H1 (cell line): ENCODE measurements at regions of chr1 and their contacts with region 1.

Region 1: GRCh38 chr1:38818175-38818976 is 41.2 kb downstream of the RRAGC start:
- DNase-seq: peak in 1 of 2 experiments; percentile 97
- H3K4me3 ChIP-seq: peak overlapping the region; percentile 52 to 74 (median 60)
- H3K27ac ChIP-seq: no peak overlapping the region
- H3K4me1 ChIP-seq: peaks cover 2 to 6% (median 3%) of the 10 kb centered on the region in 4 experiments; a peak in 4 of 7 replicates
- H3K27me3 ChIP-seq: peaks cover 6 to 43% (median 26%) of the 10 kb centered on the region in 4 experiments
- CTCF ChIP-seq: peak; percentile 64 to 97 (median 73)
- EP300 ChIP-seq: no peak
- POLR2A ChIP-seq: no peak
- RAD21 ChIP-seq: peak; percentile 72 to 94

Region 2: GRCh38 chr1:38571726-38572125 is 246.7 kb before region 1 on chr1:
- CTCF ChIA-PET with region 1: interaction called, 11 read pairs
- POLR2A ChIA-PET with region 1: no interaction called
- DNase-seq: no peak
- H3K4me3 ChIP-seq: no peak overlapping the region
- H3K27ac ChIP-seq: no peak overlapping the region
- H3K4me1 ChIP-seq: peaks cover 0 to 6% (median 4%) of the 10 kb centered on the region in 4 experiments; a peak in 3 of 7 replicates
- H3K27me3 ChIP-seq: peaks cover 0 to under 1% (median 0%) of the 10 kb centered on the region in 4 experiments; a peak in 2 of 7 replicates
- CTCF ChIP-seq: no peak
- EP300 ChIP-seq: no peak
- POLR2A ChIP-seq: no peak
- RAD21 ChIP-seq: no peak

Region 3: GRCh38 chr1:38586993-38587646 is 231.3 kb before region 1 on chr1:
- CTCF ChIA-PET with region 1: interaction called, 17 read pairs
- POLR2A ChIA-PET with region 1: no interaction called
- DNase-seq: peak; percentile 46 to 90
- H3K4me3 ChIP-seq: no peak overlapping the region
- H3K27ac ChIP-seq: no peak overlapping the region
- H3K4me1 ChIP-seq: no peaks in the 10 kb centered on the region; a peak in 2 of 7 replicates
- H3K27me3 ChIP-seq: no peaks in the 10 kb centered on the region
- CTCF ChIP-seq: peak; percentile 89 to 99 (median 93)
- EP300 ChIP-seq: no peak
- POLR2A ChIP-seq: no peak
- RAD21 ChIP-seq: peak; percentile 86 to 89

Region 4: DNA sequence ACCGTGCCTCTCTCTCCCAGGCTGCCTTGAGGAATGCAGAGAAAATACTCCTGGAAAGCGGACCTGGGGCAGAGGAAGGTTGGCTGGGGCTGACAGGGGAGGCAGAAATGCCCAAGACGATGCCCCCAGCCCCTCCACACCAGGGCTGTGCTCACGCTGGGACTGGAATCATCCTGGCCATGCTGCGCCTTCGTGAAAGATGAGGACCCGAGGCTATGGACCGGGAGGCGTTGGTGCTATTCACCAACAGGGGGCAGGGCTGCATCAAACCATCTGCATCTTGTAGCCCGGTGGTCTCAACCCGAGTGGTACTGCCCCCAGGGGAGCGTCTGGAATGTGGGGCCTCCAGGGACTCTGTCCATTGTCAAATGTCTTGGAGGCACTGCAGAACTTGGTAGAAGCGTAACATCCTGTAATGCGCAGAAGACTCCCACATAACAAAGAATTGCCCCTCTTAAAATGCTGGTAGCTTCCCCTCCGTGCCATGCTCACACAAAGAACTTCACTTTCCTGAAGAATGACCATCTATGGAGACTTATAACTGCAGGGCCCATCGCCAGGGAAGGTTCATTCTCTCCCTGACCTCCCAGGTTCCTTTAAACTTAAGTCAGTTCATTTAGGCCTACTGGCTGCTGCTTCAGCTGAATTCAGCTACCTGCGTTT is 210.0 kb before region 1 on chr1:
- CTCF ChIA-PET with region 1: interaction called, 24 read pairs
- POLR2A ChIA-PET with region 1: no interaction called
- DNase-seq: peak; percentile 49 to 85
- H3K4me3 ChIP-seq: no peak overlapping the region; a peak in 1 of 8 replicates
- H3K27ac ChIP-seq: no peak overlapping the region
- H3K4me1 ChIP-seq: peaks cover 0 to 4% (median 2%) of the 10 kb centered on the region in 4 experiments; a peak in 4 of 7 replicates
- H3K27me3 ChIP-seq: peaks cover 2 to 10% (median 5%) of the 10 kb centered on the region in 4 experiments; a peak in 5 of 7 replicates
- CTCF ChIP-seq: peak; percentile 92 to 95 (median 95)
- EP300 ChIP-seq: no peak
- POLR2A ChIP-seq: no peak
- RAD21 ChIP-seq: peak; percentile 87 to 91

Region 5: DNA sequence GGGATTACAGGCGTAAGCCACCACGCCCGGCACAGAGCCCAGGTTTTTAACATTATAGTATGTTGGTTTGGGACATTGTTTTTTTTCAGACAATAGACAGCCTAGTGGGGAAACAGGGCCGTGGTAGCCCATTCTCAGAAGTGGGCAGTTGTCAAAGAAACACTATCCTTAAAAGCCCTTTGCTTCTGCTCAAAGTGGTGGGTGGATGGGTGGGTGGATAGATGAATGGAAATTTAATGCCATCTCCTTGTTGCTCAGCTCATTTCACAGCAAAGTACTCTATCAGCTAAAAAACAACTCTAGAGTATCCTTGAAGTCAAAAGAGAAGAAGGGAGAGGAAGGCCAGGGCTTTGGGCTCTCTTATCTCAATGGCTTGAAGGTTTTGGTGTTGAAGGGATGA is 96.6 kb before region 1 on chr1:
- CTCF ChIA-PET with region 1: no interaction called
- POLR2A ChIA-PET with region 1: no interaction called
- DNase-seq: no peak
- H3K4me3 ChIP-seq: no peak overlapping the region
- H3K27ac ChIP-seq: no peak overlapping the region
- H3K4me1 ChIP-seq: peaks cover 4 to 7% (median 5%) of the 10 kb centered on the region in 4 experiments; a peak in 5 of 7 replicates
- H3K27me3 ChIP-seq: peaks cover 0 to 4% (median 0%) of the 10 kb centered on the region in 4 experiments; a peak in 3 of 7 replicates
- CTCF ChIP-seq: no peak
- EP300 ChIP-seq: no peak
- POLR2A ChIP-seq: no peak
- RAD21 ChIP-seq: no peak

Region 6: GRCh38 chr1:38803647-38804046 is 14.7 kb before region 1 on chr1:
- CTCF ChIA-PET with region 1: interaction called, 12 read pairs
- POLR2A ChIA-PET with region 1: interaction called, 4 read pairs
- DNase-seq: peak in 1 of 2 experiments; percentile 48
- H3K4me3 ChIP-seq: peak overlapping the region; percentile 17 to 56 (median 32); a peak in 7 of 8 replicates
- H3K27ac ChIP-seq: no peak overlapping the region
- H3K4me1 ChIP-seq: peaks cover 5 to 12% (median 8%) of the 10 kb centered on the region in 4 experiments
- H3K27me3 ChIP-seq: peaks cover 0 to 34% (median 28%) of the 10 kb centered on the region in 4 experiments; a peak in 6 of 7 replicates
- CTCF ChIP-seq: no peak
- EP300 ChIP-seq: no peak
- POLR2A ChIP-seq: no peak
- RAD21 ChIP-seq: no peak

Region 7: DNA sequence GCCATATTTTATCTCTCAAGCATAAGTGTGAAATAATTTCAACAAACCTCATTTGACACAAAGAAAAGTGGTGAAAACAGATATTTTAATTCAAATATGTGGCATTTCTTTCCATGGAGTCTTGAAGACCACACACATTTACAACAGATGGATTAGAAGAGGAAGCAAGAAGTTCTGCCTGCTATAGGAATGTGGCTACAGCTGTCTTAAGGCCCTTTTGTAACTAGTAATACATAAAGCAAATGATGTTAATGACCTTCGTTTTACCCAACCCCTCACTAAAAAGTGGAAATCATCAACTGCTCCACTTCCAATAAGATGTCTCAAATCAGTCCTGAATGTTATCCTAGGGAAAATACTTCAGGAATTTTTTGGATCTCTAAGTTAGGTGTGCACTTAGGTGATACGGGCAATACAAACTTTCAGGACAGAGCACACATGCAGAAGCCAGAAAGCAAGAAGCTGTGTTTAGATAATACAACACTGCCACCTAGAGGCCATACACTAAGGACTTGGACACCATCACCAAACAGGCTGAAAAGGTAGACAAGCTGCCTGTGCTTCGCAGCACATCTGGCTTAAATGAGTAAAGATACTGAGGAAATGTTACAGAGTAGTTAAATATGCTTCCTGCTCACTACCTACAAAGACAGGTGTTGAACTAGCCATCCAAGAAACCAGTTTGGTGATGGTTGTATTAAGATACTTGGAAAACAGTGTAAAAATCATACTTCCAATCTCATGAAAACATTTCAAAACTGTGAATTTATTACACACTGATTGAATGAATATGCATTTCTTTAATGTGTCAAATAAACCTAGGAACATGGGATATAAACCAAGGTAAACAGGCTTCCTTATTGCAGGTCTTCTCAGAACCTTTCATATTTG is 16.8 kb after region 1 on chr1:
- CTCF ChIA-PET with region 1: interaction called, 71 read pairs
- POLR2A ChIA-PET with region 1: no interaction called
- DNase-seq: no peak
- H3K4me3 ChIP-seq: no peak overlapping the region
- H3K27ac ChIP-seq: no peak overlapping the region
- H3K4me1 ChIP-seq: peaks cover 0 to 2% (median 0%) of the 10 kb centered on the region in 4 experiments; a peak in 3 of 7 replicates
- H3K27me3 ChIP-seq: no peaks in the 10 kb centered on the region
- CTCF ChIP-seq: peak; percentile 21 to 91 (median 78)
- EP300 ChIP-seq: no peak
- POLR2A ChIP-seq: no peak
- RAD21 ChIP-seq: peak; percentile 94 to 96

Region 8: DNA sequence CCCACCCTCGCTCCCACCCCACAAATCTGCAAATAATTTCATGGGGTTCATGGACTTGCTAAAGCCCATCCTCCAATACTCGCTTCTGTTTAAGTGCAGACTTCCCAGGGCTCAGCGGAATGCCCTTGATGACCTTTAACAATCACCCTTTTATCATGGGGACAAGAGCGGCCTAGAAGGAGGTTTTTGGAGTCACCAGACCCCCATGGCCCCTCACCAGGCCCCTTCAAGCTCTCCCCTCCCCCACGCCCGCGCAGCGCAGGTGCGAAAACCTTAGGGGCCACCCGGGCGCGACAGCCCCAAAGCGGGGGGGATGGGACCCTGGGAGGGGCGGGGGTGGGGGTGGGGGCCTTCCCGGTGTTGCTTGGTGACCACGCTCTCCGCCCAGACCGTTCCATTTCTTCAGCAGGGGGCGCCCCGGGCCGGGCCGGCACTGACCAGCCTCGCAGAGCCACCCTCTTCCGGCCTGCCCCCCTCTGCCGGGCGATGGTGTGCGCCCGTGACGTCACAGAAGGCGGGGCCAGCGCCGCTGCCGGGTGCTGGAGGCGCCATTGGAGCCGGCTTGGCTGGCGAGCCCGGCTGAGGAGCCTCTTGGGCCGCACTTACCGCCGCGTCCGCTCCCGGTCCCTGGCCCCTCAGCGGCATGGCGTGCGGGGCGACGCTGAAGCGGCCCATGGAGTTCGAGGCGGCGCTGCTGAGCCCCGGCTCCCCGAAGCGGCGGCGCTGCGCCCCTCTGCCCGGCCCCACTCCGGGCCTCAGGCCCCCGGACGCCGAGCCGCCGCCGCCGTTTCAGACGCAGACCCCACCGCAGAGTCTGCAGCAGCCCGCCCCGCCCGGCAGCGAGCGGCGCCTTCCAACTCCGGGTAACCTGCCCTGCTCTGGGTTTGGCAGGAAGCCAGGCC is 172.6 kb after region 1 on chr1 and contains the start of gene AKIRIN1:
- CTCF ChIA-PET with region 1: no interaction called
- POLR2A ChIA-PET with region 1: no interaction called
- DNase-seq: peak; percentile 89 to 99
- H3K4me3 ChIP-seq: peak within 1 kb of the TSS; percentile 83 to 100 (median 92)
- H3K27ac ChIP-seq: peak within 1 kb of the TSS; percentile 95
- H3K4me1 ChIP-seq: peaks cover 5 to 18% (median 13%) of the 10 kb centered on the region in 4 experiments
- H3K27me3 ChIP-seq: no peaks in the 10 kb centered on the region
- CTCF ChIP-seq: no peak
- EP300 ChIP-seq: peak in 1 of 2 experiments; percentile 100; a peak in 2 of 3 replicates
- POLR2A ChIP-seq: peak; percentile 93 to 95
- RAD21 ChIP-seq: peak in 1 of 2 experiments; percentile 25; a peak in 2 of 4 replicates
- total RNA-seq, gene AKIRIN1: 236 TPM in 2 replicates